CD4-positive, alpha-beta T cell (primary cell): ENCODE measurements at regions of chr17 and their contacts with region 1.

Region 1: GRCh38 chr17:30021708-30022317 is 80.4 kb downstream of the EFCAB5 start:
- DNase-seq: peak in 9 of 14 experiments; percentile 3 to 73 (median 24)
- ATAC-seq: peak; percentile 78
- H3K4me3 ChIP-seq: no peak overlapping the region
- H3K4me3 Mint-ChIP-seq: no peak overlapping the region
- H3K27ac ChIP-seq: no peak overlapping the region
- H3K27ac Mint-ChIP-seq: no peak overlapping the region
- H3K4me1 ChIP-seq: no peaks in the 10 kb centered on the region
- H3K4me1 Mint-ChIP-seq: no peaks in the 10 kb centered on the region
- H3K27me3 ChIP-seq: no peaks in the 10 kb centered on the region
- H3K27me3 Mint-ChIP-seq: peaks cover 10% of the 10 kb centered on the region
- CTCF ChIP-seq: peak; percentile 98

Region 2: DNA sequence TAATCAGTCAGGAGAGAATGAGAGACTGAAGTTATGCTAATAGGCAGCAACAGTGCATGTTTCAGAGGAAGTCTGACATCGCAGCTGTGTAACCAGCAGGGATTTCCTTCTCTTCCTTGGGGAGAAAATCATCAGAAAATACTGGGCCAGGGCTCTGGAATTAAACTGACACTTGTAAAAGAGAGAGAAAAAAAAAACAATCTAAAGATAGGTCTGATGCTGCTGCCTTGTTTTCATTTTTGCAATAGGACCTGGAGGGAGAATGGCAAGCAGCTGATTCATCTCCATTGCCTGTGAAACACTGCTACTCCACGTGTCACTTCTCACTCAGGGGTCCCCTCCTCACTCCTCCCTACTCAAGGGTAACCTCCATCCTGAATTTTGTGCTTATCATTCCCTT is 381.4 kb before region 1 on chr17:
- CTCF ChIA-PET with region 1: no interaction called
- POLR2A ChIA-PET with region 1: no interaction called
- intact Hi-C with region 1: loop called (anchors 1 to 5 kb)
- DNase-seq: no peak
- ATAC-seq: no peak
- H3K4me3 ChIP-seq: no peak overlapping the region
- H3K4me3 Mint-ChIP-seq: no peak overlapping the region
- H3K27ac ChIP-seq: no peak overlapping the region
- H3K27ac Mint-ChIP-seq: peak overlapping the region; percentile 77
- H3K4me1 ChIP-seq: no peaks in the 10 kb centered on the region
- H3K4me1 Mint-ChIP-seq: peaks cover 12% of the 10 kb centered on the region
- H3K27me3 ChIP-seq: no peaks in the 10 kb centered on the region
- H3K27me3 Mint-ChIP-seq: no peaks in the 10 kb centered on the region
- CTCF ChIP-seq: no peak

Region 3: DNA sequence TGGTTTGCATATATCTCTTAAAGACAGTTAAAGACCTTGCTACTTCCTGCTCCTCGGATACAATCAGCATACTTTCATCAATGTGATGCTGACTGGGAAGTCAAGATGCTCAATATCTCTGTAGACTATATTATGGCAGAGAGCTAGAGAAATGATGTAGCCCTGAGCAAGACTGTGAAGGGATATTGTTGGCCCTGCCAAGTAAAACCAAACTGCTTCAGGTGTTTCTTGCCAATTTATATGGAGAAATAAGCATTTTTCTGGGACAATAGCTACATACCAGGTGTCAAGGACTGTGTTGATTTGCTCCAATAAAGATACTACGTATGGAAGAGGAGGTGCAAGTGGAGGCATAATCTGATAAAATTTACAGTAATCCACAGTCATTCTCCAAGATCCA is 85.1 kb before region 1 on chr17:
- CTCF ChIA-PET with region 1: interaction called, 4 read pairs
- POLR2A ChIA-PET with region 1: no interaction called
- intact Hi-C with region 1: loop called in 1 of 2 experiments (anchors 5 kb)
- DNase-seq: no peak
- ATAC-seq: no peak
- H3K4me3 ChIP-seq: no peak overlapping the region
- H3K4me3 Mint-ChIP-seq: no peak overlapping the region
- H3K27ac ChIP-seq: no peak overlapping the region
- H3K27ac Mint-ChIP-seq: no peak overlapping the region
- H3K4me1 ChIP-seq: no peaks in the 10 kb centered on the region
- H3K4me1 Mint-ChIP-seq: no peaks in the 10 kb centered on the region
- H3K27me3 ChIP-seq: no peaks in the 10 kb centered on the region
- H3K27me3 Mint-ChIP-seq: no peaks in the 10 kb centered on the region
- CTCF ChIP-seq: no peak

Region 4: DNA sequence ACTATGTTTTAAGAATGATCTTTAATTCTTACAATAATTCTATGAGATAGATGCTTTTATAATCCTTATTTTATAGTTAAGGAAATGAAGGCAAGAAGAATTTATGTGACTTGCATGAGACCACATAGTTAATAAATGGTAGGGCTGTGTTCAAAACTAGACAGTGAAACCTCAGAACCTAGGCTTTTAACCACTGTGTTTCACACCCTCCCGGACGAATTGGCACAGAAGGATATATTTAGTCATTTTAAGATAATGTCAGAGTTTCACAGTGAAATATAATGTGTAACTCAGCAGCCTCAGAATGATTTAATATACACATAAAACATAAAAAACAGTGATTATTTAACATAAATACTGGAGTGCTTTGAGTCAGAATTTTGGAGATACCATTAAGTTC is 151.8 kb after region 1 on chr17:
- CTCF ChIA-PET with region 1: no interaction called
- POLR2A ChIA-PET with region 1: no interaction called
- intact Hi-C with region 1: no loop called
- DNase-seq: peak in 1 of 14 experiments; percentile 9
- ATAC-seq: no peak
- H3K4me3 ChIP-seq: no peak overlapping the region
- H3K4me3 Mint-ChIP-seq: no peak overlapping the region
- H3K27ac ChIP-seq: no peak overlapping the region
- H3K27ac Mint-ChIP-seq: no peak overlapping the region
- H3K4me1 ChIP-seq: no peaks in the 10 kb centered on the region
- H3K4me1 Mint-ChIP-seq: peaks cover 5% of the 10 kb centered on the region
- H3K27me3 ChIP-seq: no peaks in the 10 kb centered on the region
- H3K27me3 Mint-ChIP-seq: no peaks in the 10 kb centered on the region
- CTCF ChIP-seq: no peak